PC-9 (cell line): ENCODE measurements at regions of chr13 and their contacts with region 1.

Region 1: DNA sequence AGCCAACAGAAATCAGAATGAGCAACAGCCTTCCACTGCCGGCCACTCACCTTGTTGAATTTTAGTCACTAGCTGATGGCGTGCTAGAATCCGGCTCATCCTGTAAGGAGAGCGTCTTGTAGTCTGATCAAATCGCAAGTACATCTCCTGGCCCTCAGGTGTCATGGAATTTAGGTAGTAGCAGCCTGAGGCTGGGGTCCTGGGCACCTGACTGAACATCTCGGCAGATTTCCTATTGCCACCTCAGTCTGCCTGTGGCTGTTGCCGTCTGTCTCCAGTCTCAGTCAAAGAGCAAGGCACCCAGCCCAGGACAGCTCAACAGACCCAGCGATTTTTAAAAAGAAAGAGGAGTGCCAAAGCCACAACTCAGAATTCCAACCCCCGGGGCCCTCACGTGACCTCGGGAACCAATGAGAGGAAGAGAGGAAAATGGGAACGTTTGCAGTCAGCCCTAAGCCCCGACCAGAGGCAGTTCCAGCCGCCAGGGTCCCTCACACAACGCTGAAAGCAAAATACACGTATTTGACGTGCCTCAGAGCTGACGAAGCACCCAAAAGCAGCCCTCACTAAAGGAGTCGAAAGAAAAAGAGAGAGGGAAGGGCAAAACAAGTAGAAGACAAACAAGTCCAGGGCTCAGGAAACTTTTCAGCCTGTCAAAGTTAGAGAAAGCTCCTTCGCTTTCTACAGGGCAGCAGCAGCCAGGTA is at the start of gene STARD13:
- DNase-seq: peak; percentile 91 to 93
- H3K4me3 ChIP-seq: peak within 1 kb of the TSS; percentile 94
- H3K27ac ChIP-seq: peak within 1 kb of the TSS; percentile 81
- H3K4me1 ChIP-seq: peaks cover 52% of the 10 kb centered on the region
- H3K27me3 ChIP-seq: no peaks in the 10 kb centered on the region
- CTCF ChIP-seq: no peak; the same call in 1 of the 2 replicates
- total RNA-seq, gene STARD13: 13.9 and 19.6 TPM in 2 replicates

Region 2: GRCh38 chr13:33069365-33069764 is 216.2 kb before region 1 on chr13:
- CTCF ChIA-PET with region 1: interaction called, 15 read pairs
- POLR2A ChIA-PET with region 1: no interaction called
- intact Hi-C with region 1: no loop called
- DNase-seq: no peak
- H3K4me3 ChIP-seq: no peak overlapping the region
- H3K27ac ChIP-seq: no peak overlapping the region
- H3K4me1 ChIP-seq: no peaks in the 10 kb centered on the region
- H3K27me3 ChIP-seq: no peaks in the 10 kb centered on the region
- CTCF ChIP-seq: no peak

Region 3: GRCh38 chr13:33119871-33120456 is 165.6 kb before region 1 on chr13:
- CTCF ChIA-PET with region 1: no interaction called
- POLR2A ChIA-PET with region 1: no interaction called
- intact Hi-C with region 1: loop called (anchors 1 kb)
- DNase-seq: peak; percentile 62 to 97
- H3K4me3 ChIP-seq: peak overlapping the region; percentile 32; the same call in 1 of the 2 replicates
- H3K27ac ChIP-seq: peak overlapping the region; percentile 98
- H3K4me1 ChIP-seq: peaks cover 65% of the 10 kb centered on the region
- H3K27me3 ChIP-seq: no peaks in the 10 kb centered on the region
- CTCF ChIP-seq: no peak

Region 4: DNA sequence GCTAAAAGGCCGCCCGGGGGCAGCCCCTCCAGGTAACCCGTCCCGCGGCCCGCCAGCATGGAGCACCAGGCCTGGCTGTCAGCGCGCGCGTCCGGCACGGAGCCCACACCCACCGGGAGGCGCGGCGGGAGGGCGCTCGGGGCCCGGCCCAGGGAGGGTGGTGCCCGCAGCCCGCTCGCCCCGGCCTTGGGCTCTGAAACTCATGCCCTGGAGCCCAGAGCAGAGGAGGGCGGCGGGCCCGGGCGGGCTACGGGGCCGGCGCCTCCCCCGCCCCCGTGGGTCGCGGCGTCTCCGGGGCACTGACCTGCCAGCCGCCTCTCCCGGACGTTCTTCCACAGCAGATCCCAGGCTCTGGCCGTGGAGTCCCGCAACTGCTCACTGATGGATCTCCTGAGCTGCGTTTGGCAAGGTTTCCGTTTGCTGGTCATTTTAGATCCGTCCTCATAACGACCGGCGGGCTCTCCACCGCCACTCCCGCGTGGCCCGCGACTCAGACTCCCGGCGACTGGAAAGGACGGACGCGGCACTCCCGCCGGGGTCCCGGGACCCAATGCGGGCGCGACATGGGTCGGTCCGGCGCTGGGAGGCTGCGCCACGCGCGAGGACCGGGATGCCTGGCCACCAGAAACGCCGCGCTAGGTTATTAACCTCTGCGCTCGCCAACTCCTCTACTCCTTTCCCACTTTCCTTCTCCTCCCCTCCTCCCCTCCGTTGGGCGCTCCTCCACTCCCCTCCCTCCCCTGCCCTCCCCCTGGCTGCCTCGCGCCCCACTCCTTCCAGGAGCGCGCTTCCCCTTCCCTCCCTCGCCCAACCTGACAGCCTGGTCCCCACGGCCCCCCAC is 64.6 kb after region 1 on chr13:
- CTCF ChIA-PET with region 1: no interaction called
- POLR2A ChIA-PET with region 1: no interaction called
- intact Hi-C with region 1: loop called (anchors 2 kb)
- DNase-seq: peak in 1 of 2 experiments; percentile 40
- H3K4me3 ChIP-seq: peak overlapping the region; percentile 79
- H3K27ac ChIP-seq: no peak overlapping the region
- H3K4me1 ChIP-seq: no peaks in the 10 kb centered on the region
- H3K27me3 ChIP-seq: no peaks in the 10 kb centered on the region
- CTCF ChIP-seq: no peak

Region 5: GRCh38 chr13:34090888-34091287 is 805.3 kb after region 1 on chr13:
- CTCF ChIA-PET with region 1: no interaction called
- POLR2A ChIA-PET with region 1: no interaction called
- intact Hi-C with region 1: no loop called
- DNase-seq: no peak
- H3K4me3 ChIP-seq: no peak overlapping the region
- H3K27ac ChIP-seq: no peak overlapping the region
- H3K4me1 ChIP-seq: no peaks in the 10 kb centered on the region
- H3K27me3 ChIP-seq: no peaks in the 10 kb centered on the region
- CTCF ChIP-seq: no peak